ENCODE measurements at regions of chr15 and their contacts with region 1.

Region 1: DNA sequence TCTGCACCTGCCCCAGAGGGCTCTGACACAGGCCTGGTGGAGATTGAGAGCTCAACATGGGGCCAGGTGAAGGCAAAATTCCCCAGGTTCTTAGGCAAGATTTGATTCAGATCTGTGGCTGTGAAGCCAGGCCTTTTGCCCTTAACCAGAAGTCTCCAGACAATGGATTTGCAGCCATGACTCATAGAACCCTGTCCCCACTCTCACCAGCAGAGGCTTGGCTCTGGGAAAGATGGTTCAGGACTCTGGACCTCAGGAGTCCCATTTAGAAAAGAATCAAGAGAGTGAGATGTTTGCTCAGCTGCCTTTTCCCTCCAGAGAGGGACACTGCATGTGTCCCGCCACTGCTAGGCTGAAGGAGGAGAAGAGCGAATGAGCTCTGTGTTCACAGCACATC is 361.4 kb upstream of the ICE2 start:
- DNase-seq: peak in 1 of 2 donors; percentile 53
- ATAC-seq: peak in 1 of 3 donors; percentile 2
- H3K4me3 ChIP-seq: no peak overlapping the region
- H3K4me3 Mint-ChIP-seq: peak overlapping the region; percentile 90
- H3K27ac ChIP-seq: peak overlapping the region; percentile 81
- H3K27ac Mint-ChIP-seq: peak overlapping the region; percentile 87 to 95
- H3K4me1 ChIP-seq: peaks cover 67% of the 10 kb centered on the region
- H3K4me1 Mint-ChIP-seq: peaks cover 72 to 74% of the 10 kb centered on the region in 2 donors
- H3K27me3 ChIP-seq: no peaks in the 10 kb centered on the region
- H3K27me3 Mint-ChIP-seq: no peaks in the 10 kb centered on the region
- CTCF ChIP-seq: no peak

Region 2: DNA sequence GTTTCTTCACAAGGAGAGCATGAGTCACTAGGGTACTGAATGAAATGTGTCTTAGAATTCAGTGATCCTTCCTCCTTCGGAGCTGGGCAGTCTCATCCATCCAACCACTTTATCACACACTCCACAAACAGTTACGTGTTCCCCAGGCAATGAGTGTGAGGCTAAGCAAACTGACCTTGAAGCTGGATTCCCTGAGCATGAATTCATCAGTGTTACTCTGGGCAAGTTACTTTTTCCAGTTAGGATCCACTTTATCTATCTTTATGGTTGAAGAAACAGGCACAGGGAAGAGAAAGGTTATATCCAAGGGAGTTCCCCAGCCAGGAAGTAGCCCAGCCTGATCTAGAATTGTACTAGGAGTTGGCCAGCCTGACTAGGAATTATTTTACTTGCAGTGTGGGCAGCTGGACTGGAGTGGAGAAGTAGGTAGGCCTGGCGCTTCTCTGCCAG is 1245.8 kb before region 1 on chr15:
- intact Hi-C with region 1: no loop called
- DNase-seq: no peak
- ATAC-seq: no peak
- H3K4me3 ChIP-seq: no peak overlapping the region
- H3K4me3 Mint-ChIP-seq: no peak overlapping the region
- H3K27ac ChIP-seq: no peak overlapping the region
- H3K27ac Mint-ChIP-seq: no peak overlapping the region
- H3K4me1 ChIP-seq: no peaks in the 10 kb centered on the region
- H3K4me1 Mint-ChIP-seq: peaks cover 0 to 6% of the 10 kb centered on the region in 2 donors
- H3K27me3 ChIP-seq: peaks cover 2% of the 10 kb centered on the region
- H3K27me3 Mint-ChIP-seq: peaks cover 18 to 47% of the 10 kb centered on the region in 2 donors
- CTCF ChIP-seq: no peak

Region 3: GRCh38 chr15:60397772-60398445 is 442.4 kb before region 1 on chr15 and contains the start of gene ANXA2:
- intact Hi-C with region 1: loop called (anchors 5 kb)
- DNase-seq: peak; percentile 72 to 89
- ATAC-seq: peak; percentile 70 to 83 (median 78)
- H3K4me3 ChIP-seq: peak within 1 kb of the TSS; percentile 65
- H3K4me3 Mint-ChIP-seq: peak within 1 kb of the TSS; percentile 89
- H3K27ac ChIP-seq: peak within 1 kb of the TSS; percentile 71
- H3K27ac Mint-ChIP-seq: peak within 1 kb of the TSS; percentile 92 to 93
- H3K4me1 ChIP-seq: peaks cover 30% of the 10 kb centered on the region
- H3K4me1 Mint-ChIP-seq: peaks cover 47 to 57% of the 10 kb centered on the region in 2 donors
- H3K27me3 ChIP-seq: no peaks in the 10 kb centered on the region
- H3K27me3 Mint-ChIP-seq: no peaks in the 10 kb centered on the region
- CTCF ChIP-seq: no peak
- total RNA-seq, gene ANXA2: 132 to 230 (median 155) TPM

Region 4: GRCh38 chr15:60541481-60542299 is 298.6 kb before region 1 on chr15:
- intact Hi-C with region 1: loop called (anchors 2 kb)
- DNase-seq: peak in 1 of 2 donors; percentile 44
- ATAC-seq: peak; percentile 54 to 70 (median 69)
- H3K4me3 ChIP-seq: no peak overlapping the region
- H3K4me3 Mint-ChIP-seq: peak overlapping the region; percentile 79
- H3K27ac ChIP-seq: peak overlapping the region; percentile 73
- H3K27ac Mint-ChIP-seq: peak overlapping the region; percentile 93 to 95
- H3K4me1 ChIP-seq: peaks cover 54% of the 10 kb centered on the region
- H3K4me1 Mint-ChIP-seq: peaks cover 98% of the 10 kb centered on the region in 2 donors
- H3K27me3 ChIP-seq: no peaks in the 10 kb centered on the region
- H3K27me3 Mint-ChIP-seq: no peaks in the 10 kb centered on the region
- CTCF ChIP-seq: no peak

Region 5: GRCh38 chr15:60667190-60667868 is 173.0 kb before region 1 on chr15:
- intact Hi-C with region 1: loop called (anchors 5 kb)
- DNase-seq: peak in 1 of 2 donors; percentile 16
- ATAC-seq: peak; percentile 77 to 87 (median 78)
- H3K4me3 ChIP-seq: no peak overlapping the region
- H3K4me3 Mint-ChIP-seq: peak overlapping the region; percentile 88
- H3K27ac ChIP-seq: peak overlapping the region; percentile 24
- H3K27ac Mint-ChIP-seq: peak overlapping the region; percentile 89
- H3K4me1 ChIP-seq: peaks cover 15% of the 10 kb centered on the region
- H3K4me1 Mint-ChIP-seq: peaks cover 20 to 25% of the 10 kb centered on the region in 2 donors
- H3K27me3 ChIP-seq: no peaks in the 10 kb centered on the region
- H3K27me3 Mint-ChIP-seq: no peaks in the 10 kb centered on the region
- CTCF ChIP-seq: no peak

Region 6: GRCh38 chr15:60916679-60917460 is 76.6 kb after region 1 on chr15:
- intact Hi-C with region 1: loop called (anchors 2 kb)
- DNase-seq: peak; percentile 76 to 96
- ATAC-seq: peak; percentile 94 to 98 (median 96)
- H3K4me3 ChIP-seq: no peak overlapping the region
- H3K4me3 Mint-ChIP-seq: no peak overlapping the region
- H3K27ac ChIP-seq: peak overlapping the region; percentile 12
- H3K27ac Mint-ChIP-seq: peak overlapping the region; percentile 82 to 83
- H3K4me1 ChIP-seq: peaks cover 7% of the 10 kb centered on the region
- H3K4me1 Mint-ChIP-seq: peaks cover 8 to 13% of the 10 kb centered on the region in 2 donors
- H3K27me3 ChIP-seq: no peaks in the 10 kb centered on the region
- H3K27me3 Mint-ChIP-seq: no peaks in the 10 kb centered on the region
- CTCF ChIP-seq: peak; percentile 88